ENCODE measurements at regions of chr2 and their contacts with region 1.

Region 1: GRCh38 chr2:49812730-49813129 is 658.4 kb upstream of the FSHR start:
- DNase-seq: no peak

Region 2: GRCh38 chr2:49753344-49753985 is 59.3 kb before region 1 on chr2:
- in situ Hi-C with region 1: no loop called
- DNase-seq: no peak

Region 3: DNA sequence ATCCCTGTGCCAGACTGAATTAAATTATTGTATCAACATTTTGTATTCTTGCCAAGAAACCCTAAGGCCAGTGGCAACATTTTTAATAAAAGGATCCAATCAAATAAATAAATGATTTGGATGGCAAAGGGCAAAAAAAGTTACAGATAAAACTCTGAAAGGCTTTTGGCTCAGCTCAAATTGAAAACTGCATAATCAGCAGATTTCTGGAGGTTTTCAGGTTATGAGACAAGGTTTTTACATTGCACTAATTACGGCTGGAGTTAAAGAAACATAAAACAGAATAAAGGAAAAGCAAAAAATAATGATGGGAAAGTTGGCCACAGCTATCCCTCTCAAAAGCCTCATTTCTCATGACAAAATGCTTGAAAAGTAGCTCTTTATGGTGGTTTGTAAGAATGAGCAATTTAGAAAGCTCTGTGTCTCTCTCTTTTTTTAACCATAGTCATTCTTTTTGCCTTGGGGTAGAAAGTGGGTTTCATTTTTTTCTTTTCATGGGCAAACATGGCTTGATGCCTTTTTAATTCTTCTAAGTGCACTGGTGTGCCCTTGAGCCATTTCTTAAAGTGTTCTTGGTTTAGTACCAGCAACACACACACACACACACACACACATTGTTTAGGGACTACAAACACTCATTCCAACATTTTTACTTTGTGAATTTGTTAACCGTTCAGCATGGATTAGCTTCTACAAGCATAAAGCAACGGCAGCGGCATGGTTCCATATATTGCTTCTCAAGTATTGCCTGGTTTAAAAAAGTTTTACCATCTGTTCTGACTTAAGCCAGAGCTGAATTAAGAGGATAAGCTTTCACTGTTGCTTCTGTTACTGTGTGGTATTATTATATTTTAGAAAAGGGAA is 88.7 kb after region 1 on chr2:
- in situ Hi-C with region 1: loop called (anchors 5 kb)
- DNase-seq: no peak